ENCODE measurements at regions of chr6 and their contacts with region 1.

Region 1: GRCh38 chr6:52664186-52664990 is 6.5 kb upstream of the TMEM14A start:
- DNase-seq: peak; percentile 11 to 70 (median 29)
- ATAC-seq: peak; percentile 71
- H3K4me3 ChIP-seq: peak overlapping the region; percentile 60
- H3K4me3 Mint-ChIP-seq: no peak overlapping the region
- H3K27ac ChIP-seq: no peak overlapping the region
- H3K27ac Mint-ChIP-seq: no peak overlapping the region
- H3K4me1 ChIP-seq: peaks cover 11% of the 10 kb centered on the region
- H3K4me1 Mint-ChIP-seq: no peaks in the 10 kb centered on the region
- H3K27me3 ChIP-seq: peaks cover 4 to 6% of the 10 kb centered on the region in 2 experiments
- H3K27me3 Mint-ChIP-seq: no peaks in the 10 kb centered on the region
- CTCF ChIP-seq: no peak

Region 2: GRCh38 chr6:52063584-52064344 is 600.6 kb before region 1 on chr6:
- CTCF ChIA-PET with region 1: no interaction called
- POLR2A ChIA-PET with region 1: no interaction called
- intact Hi-C with region 1: loop called in 1 of 2 experiments (anchors 2 kb)
- DNase-seq: peak; percentile 12 to 76 (median 38)
- ATAC-seq: peak; percentile 90
- H3K4me3 ChIP-seq: peak overlapping the region; percentile 26
- H3K4me3 Mint-ChIP-seq: peak overlapping the region; percentile 64
- H3K27ac ChIP-seq: peak overlapping the region in 1 of 2 donors; percentile 21
- H3K27ac Mint-ChIP-seq: peak overlapping the region; percentile 24
- H3K4me1 ChIP-seq: peaks cover 11% of the 10 kb centered on the region
- H3K4me1 Mint-ChIP-seq: peaks cover 14% of the 10 kb centered on the region
- H3K27me3 ChIP-seq: no peaks in the 10 kb centered on the region
- H3K27me3 Mint-ChIP-seq: no peaks in the 10 kb centered on the region
- CTCF ChIP-seq: peak; percentile 55

Region 3: GRCh38 chr6:52284460-52285176 is 379.8 kb before region 1 on chr6 and contains the start of gene MCM3:
- CTCF ChIA-PET with region 1: no interaction called
- POLR2A ChIA-PET with region 1: interaction called, 4 read pairs
- intact Hi-C with region 1: loop called (anchors 1 to 2 kb)
- DNase-seq: peak; percentile 86 to 99 (median 92)
- ATAC-seq: peak; percentile 92
- H3K4me3 ChIP-seq: peak within 1 kb of the TSS; percentile 57
- H3K4me3 Mint-ChIP-seq: peak within 1 kb of the TSS; percentile 60
- H3K27ac ChIP-seq: peak within 1 kb of the TSS; percentile 51 to 59
- H3K27ac Mint-ChIP-seq: peak within 1 kb of the TSS; percentile 34
- H3K4me1 ChIP-seq: peaks cover 29% of the 10 kb centered on the region
- H3K4me1 Mint-ChIP-seq: peaks cover 49% of the 10 kb centered on the region
- H3K27me3 ChIP-seq: no peaks in the 10 kb centered on the region
- H3K27me3 Mint-ChIP-seq: no peaks in the 10 kb centered on the region
- CTCF ChIP-seq: no peak
- total RNA-seq, gene MCM3: 9.3 to 10.1 TPM

Region 4: GRCh38 chr6:52419809-52420670 is 244.3 kb before region 1 on chr6 and contains the start of gene EFHC1:
- CTCF ChIA-PET with region 1: interaction called, 5 read pairs
- POLR2A ChIA-PET with region 1: interaction called, 4 read pairs
- intact Hi-C with region 1: loop called (anchors 1 kb)
- DNase-seq: peak; percentile 95 to 99 (median 97)
- ATAC-seq: peak; percentile 88
- H3K4me3 ChIP-seq: peak within 1 kb of the TSS; percentile 80
- H3K4me3 Mint-ChIP-seq: no peak within 1 kb of the TSS
- H3K27ac ChIP-seq: peak within 1 kb of the TSS; percentile 33 to 57
- H3K27ac Mint-ChIP-seq: no peak within 1 kb of the TSS
- H3K4me1 ChIP-seq: peaks cover 23% of the 10 kb centered on the region
- H3K4me1 Mint-ChIP-seq: peaks cover 19% of the 10 kb centered on the region
- H3K27me3 ChIP-seq: no peaks in the 10 kb centered on the region
- H3K27me3 Mint-ChIP-seq: no peaks in the 10 kb centered on the region
- CTCF ChIP-seq: no peak
- total RNA-seq, gene EFHC1: 3.4 to 4.8 TPM

Region 5: GRCh38 chr6:52995913-52996645 is 331.7 kb after region 1 on chr6:
- CTCF ChIA-PET with region 1: no interaction called
- POLR2A ChIA-PET with region 1: no interaction called
- intact Hi-C with region 1: loop called in 1 of 2 experiments (anchors 5 kb)
- DNase-seq: peak in 13 of 14 experiments; percentile 2 to 75 (median 27)
- ATAC-seq: peak; percentile 7
- H3K4me3 ChIP-seq: peak overlapping the region; percentile 74
- H3K4me3 Mint-ChIP-seq: peak overlapping the region; percentile 91
- H3K27ac ChIP-seq: no peak overlapping the region
- H3K27ac Mint-ChIP-seq: peak overlapping the region; percentile 100
- H3K4me1 ChIP-seq: peaks cover 15% of the 10 kb centered on the region
- H3K4me1 Mint-ChIP-seq: peaks cover 24% of the 10 kb centered on the region
- H3K27me3 ChIP-seq: no peaks in the 10 kb centered on the region
- H3K27me3 Mint-ChIP-seq: peaks cover 14% of the 10 kb centered on the region
- CTCF ChIP-seq: no peak

Region 6: GRCh38 chr6:53916804-53917463 is 1252.5 kb after region 1 on chr6:
- CTCF ChIA-PET with region 1: no interaction called
- POLR2A ChIA-PET with region 1: no interaction called
- intact Hi-C with region 1: no loop called
- DNase-seq: no peak
- ATAC-seq: no peak
- H3K4me3 ChIP-seq: no peak overlapping the region
- H3K4me3 Mint-ChIP-seq: no peak overlapping the region
- H3K27ac ChIP-seq: no peak overlapping the region
- H3K27ac Mint-ChIP-seq: no peak overlapping the region
- H3K4me1 ChIP-seq: no peaks in the 10 kb centered on the region
- H3K4me1 Mint-ChIP-seq: no peaks in the 10 kb centered on the region
- H3K27me3 ChIP-seq: no peaks in the 10 kb centered on the region
- H3K27me3 Mint-ChIP-seq: no peaks in the 10 kb centered on the region
- CTCF ChIP-seq: no peak

Measured in CD4-positive, alpha-beta T cell (primary cell).